ENCODE measurements at regions of chr1 and their contacts with region 1.

Region 1: GRCh38 chr1:11099310-11100149 is at the start of gene EXOSC10:
- DNase-seq: peak; percentile 93 to 97
- ATAC-seq: peak; percentile 98 to 99 (median 99)
- H3K4me3 ChIP-seq: peak within 1 kb of the TSS; percentile 85 to 100 (median 95)
- H3K27ac ChIP-seq: peak within 1 kb of the TSS; percentile 56 to 91 (median 86)
- H3K4me1 ChIP-seq: peaks cover 4 to 19% (median 13%) of the 10 kb centered on the region in 9 donors
- H3K27me3 ChIP-seq: no peaks in the 10 kb centered on the region
- CTCF ChIP-seq: no peak
- total RNA-seq, gene EXOSC10: 18.4 to 26.5 (median 21.4) TPM

Region 2: GRCh38 chr1:10561955-10562354 is 537.6 kb before region 1 on chr1:
- intact Hi-C with region 1: no loop called
- DNase-seq: no peak
- ATAC-seq: no peak
- H3K4me3 ChIP-seq: no peak overlapping the region
- H3K27ac ChIP-seq: no peak overlapping the region
- H3K4me1 ChIP-seq: peaks cover 0 to 8% (median 0%) of the 10 kb centered on the region in 9 donors
- H3K27me3 ChIP-seq: no peaks in the 10 kb centered on the region
- CTCF ChIP-seq: no peak

Region 3: DNA sequence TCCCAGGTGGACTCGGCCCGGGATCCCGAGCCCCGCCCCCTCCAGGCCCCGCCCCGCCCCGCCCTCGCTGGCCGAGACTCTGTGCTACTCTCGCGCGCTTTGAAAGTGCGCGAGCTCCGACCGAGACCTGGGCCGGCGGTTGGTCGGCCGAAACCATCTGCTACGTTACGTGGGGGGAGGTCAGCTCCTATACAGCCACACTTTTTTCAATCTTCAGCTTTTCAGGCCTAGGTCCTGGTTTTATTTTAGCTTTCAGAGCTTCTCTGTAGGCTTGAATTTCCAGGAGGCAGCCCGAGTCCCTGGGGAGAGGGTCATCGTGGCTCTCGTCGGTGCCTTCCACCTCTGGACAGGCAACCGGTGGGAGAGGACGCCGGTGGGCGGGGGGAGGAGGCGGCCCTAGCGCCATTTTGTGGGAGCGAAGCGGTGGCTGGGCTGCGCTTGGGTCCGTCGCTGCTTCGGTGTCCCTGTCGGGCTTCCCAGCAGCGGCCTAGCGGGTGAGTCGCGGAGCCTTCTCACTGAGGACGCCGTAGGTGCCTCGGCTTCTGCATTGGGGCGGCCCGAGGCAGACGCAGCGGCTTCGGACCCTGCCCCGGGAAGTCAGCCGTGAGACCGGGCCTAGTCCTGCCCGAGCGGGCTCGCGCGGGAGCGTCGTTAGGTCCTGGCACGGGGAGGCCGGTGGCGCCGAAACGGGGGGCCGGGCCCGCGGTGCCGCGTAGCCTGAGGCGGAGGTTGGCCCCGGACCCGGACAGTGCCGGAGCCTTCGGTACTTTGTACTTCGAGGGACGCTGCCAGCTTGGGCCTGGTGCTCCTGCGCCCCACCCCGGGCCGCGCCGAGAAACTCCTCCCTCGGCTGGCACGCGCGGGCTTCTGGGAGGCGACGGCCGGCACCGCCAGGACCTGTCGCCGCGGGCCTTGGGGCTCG is 87.0 kb before region 1 on chr1 and contains the start of gene TARDBP:
- intact Hi-C with region 1: loop called in 1 of 10 experiments (anchors 10 kb)
- DNase-seq: peak; percentile 90 to 91
- ATAC-seq: peak; percentile 96 to 99 (median 98)
- H3K4me3 ChIP-seq: peak within 1 kb of the TSS; percentile 75 to 100 (median 88)
- H3K27ac ChIP-seq: peak within 1 kb of the TSS; percentile 81 to 98 (median 94)
- H3K4me1 ChIP-seq: peaks cover 4 to 49% (median 35%) of the 10 kb centered on the region in 9 donors
- H3K27me3 ChIP-seq: no peaks in the 10 kb centered on the region
- CTCF ChIP-seq: no peak
- total RNA-seq, gene TARDBP: 77.4 to 138 (median 108) TPM

Region 4: GRCh38 chr1:11026052-11026451 is 73.5 kb before region 1 on chr1:
- intact Hi-C with region 1: loop called in 1 of 10 experiments (anchors 10 kb)
- DNase-seq: no peak
- ATAC-seq: no peak
- H3K4me3 ChIP-seq: no peak overlapping the region
- H3K27ac ChIP-seq: no peak overlapping the region
- H3K4me1 ChIP-seq: no peaks in the 10 kb centered on the region
- H3K27me3 ChIP-seq: no peaks in the 10 kb centered on the region
- CTCF ChIP-seq: no peak

Region 5: DNA sequence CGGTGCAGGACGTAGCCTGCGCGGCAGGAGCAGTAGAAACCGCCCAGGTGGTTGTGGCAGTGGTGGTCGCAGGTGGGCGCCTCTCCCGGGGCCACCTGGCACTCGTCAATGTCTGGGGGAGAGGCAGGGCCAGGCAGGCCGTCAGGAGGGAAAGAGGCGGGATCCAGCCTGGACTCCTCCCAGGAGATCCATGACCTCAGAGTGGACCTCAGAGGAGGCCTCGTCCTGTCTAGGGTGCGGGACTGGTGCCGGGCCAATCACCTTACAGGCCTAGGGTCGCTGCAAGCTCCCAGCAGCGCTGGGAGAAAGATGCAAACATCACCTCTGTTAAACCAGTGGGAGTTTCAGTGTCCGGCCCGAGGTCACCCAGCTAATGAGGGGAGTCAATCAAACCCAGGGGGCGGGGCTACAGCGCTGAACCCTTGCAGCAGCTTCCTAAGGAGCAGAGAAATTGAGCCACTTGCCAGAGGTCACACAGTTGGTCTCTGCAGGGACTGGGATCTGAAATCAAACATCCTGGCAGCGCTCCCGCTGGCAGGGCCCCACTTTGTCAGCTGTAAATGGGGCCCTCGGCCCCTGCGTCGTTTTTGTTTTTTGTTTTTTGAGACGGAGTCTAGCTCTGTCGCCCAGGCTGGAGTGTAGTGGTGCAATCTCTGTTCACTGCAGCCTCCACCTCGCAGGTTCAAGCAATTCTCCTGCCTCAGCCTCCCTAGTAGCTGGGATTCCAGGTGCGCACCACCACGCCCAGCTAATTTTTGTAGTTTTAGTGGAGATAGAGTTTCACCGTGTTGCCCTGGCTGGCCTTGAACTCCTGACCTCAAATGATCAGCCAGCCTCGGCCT is 53.9 kb before region 1 on chr1:
- intact Hi-C with region 1: loop called in 1 of 10 experiments (anchors 10 kb)
- DNase-seq: no peak
- ATAC-seq: peak in 1 of 8 donors; percentile 13
- H3K4me3 ChIP-seq: no peak overlapping the region
- H3K27ac ChIP-seq: no peak overlapping the region
- H3K4me1 ChIP-seq: no peaks in the 10 kb centered on the region
- H3K27me3 ChIP-seq: no peaks in the 10 kb centered on the region
- CTCF ChIP-seq: no peak

Region 6: GRCh38 chr1:11126569-11126968 is 27.0 kb after region 1 on chr1:
- intact Hi-C with region 1: no loop called
- DNase-seq: no peak
- ATAC-seq: no peak
- H3K4me3 ChIP-seq: no peak overlapping the region
- H3K27ac ChIP-seq: no peak overlapping the region
- H3K4me1 ChIP-seq: peaks cover 0 to 5% (median 0%) of the 10 kb centered on the region in 9 donors
- H3K27me3 ChIP-seq: no peaks in the 10 kb centered on the region
- CTCF ChIP-seq: no peak

Region 7: DNA sequence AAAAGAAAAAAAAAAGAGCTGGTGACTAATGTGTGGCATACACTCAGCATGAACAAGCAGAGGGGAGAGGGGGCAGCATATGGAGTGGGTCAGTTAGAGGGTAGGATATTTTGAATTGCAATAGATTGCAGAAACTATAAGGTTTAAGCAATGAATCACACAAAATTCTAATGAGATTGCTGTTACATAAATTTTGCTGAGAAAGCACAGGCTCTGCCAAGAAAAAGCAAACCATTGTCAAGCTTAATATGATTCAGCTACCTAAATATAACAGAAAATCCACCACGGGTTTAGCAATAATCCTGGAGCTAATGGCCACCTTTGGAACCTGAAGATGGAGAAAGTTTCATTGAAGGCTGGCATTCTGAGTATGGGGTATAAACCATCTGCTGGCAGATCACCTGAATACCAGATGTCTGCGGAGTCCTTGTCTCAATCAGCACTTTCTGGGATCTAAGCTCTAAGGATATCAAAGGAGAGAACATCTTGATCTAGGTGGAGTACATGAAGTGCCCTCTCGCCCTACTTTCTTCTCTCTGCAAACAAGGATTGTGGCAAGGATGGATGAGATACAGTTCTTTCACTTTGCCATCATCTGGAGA is 59.3 kb after region 1 on chr1:
- intact Hi-C with region 1: no loop called
- DNase-seq: no peak
- ATAC-seq: peak in 1 of 8 donors; percentile 16
- H3K4me3 ChIP-seq: no peak overlapping the region
- H3K27ac ChIP-seq: peak overlapping the region in 4 of 10 donors; percentile 29 to 62 (median 52)
- H3K4me1 ChIP-seq: peaks cover 3 to 27% (median 21%) of the 10 kb centered on the region in 9 donors
- H3K27me3 ChIP-seq: no peaks in the 10 kb centered on the region
- CTCF ChIP-seq: no peak

Region 8: DNA sequence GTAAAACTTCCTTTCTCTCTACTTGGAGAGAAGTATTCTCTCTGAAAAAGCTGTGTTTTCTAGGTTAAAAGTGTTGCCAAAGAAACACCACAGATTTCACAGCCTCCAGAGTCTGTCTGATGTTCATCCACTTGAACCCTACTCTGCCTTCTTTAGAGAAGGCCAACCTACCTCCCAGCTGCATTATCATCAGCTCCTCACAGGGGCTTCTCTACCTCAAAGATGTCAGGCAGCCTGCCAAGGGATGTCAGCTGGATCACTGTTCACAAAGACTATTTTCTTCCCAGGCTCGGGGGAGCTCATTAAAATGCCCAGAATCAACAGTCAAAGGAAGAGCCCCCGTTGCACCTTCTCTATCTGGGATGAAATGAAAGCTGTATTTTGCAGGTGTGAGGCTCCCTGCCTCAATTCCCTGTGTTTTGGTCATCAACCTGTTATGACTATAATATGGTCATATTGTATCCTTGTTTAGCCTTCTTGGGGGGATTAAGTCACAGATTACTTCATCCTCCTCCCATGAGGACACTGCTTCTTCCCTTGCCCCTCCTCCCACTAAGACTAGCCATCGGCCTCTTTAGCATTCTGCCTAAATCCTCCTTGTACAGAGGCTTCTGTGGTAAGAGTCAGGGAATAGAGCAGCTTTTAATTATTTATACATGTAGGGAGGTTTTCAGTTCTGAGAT is 115.3 kb after region 1 on chr1:
- intact Hi-C with region 1: loop called in 1 of 10 experiments (anchors 10 kb)
- DNase-seq: no peak
- ATAC-seq: no peak
- H3K4me3 ChIP-seq: no peak overlapping the region
- H3K27ac ChIP-seq: no peak overlapping the region
- H3K4me1 ChIP-seq: no peaks in the 10 kb centered on the region
- H3K27me3 ChIP-seq: no peaks in the 10 kb centered on the region
- CTCF ChIP-seq: no peak

Region 9: GRCh38 chr1:11615090-11615489 is 515.6 kb after region 1 on chr1:
- intact Hi-C with region 1: no loop called
- DNase-seq: no peak
- ATAC-seq: no peak
- H3K4me3 ChIP-seq: no peak overlapping the region
- H3K27ac ChIP-seq: no peak overlapping the region
- H3K4me1 ChIP-seq: peaks cover 0 to 7% (median 0%) of the 10 kb centered on the region in 9 donors
- H3K27me3 ChIP-seq: peaks cover 0 to 60% (median 18%) of the 10 kb centered on the region in 7 donors
- CTCF ChIP-seq: no peak

Measured in heart right ventricle (tissue), 16 donors.